ENCODE measurements at regions of chr2 and their contacts with region 1.

Region 1: GRCh38 chr2:106789197-106789596 is 96.8 kb downstream of the ST6GAL2 start:
- DNase-seq: no peak
- H3K4me3 ChIP-seq: no peak overlapping the region
- H3K27ac ChIP-seq: no peak overlapping the region
- H3K4me1 ChIP-seq: no peaks in the 10 kb centered on the region
- H3K27me3 ChIP-seq: no peaks in the 10 kb centered on the region
- CTCF ChIP-seq: no peak
- EP300 ChIP-seq: no peak
- POLR2A ChIP-seq: no peak

Region 2: GRCh38 chr2:106701203-106702022 is 87.8 kb before region 1 on chr2:
- in situ Hi-C with region 1: no loop called
- intact Hi-C with region 1: no loop called
- DNase-seq: peak; percentile 60
- H3K4me3 ChIP-seq: no peak overlapping the region
- H3K27ac ChIP-seq: peak overlapping the region in 2 of 4 donors; percentile 28 to 32
- H3K4me1 ChIP-seq: peaks cover 4 to 35% (median 21%) of the 10 kb centered on the region in 4 donors
- H3K27me3 ChIP-seq: no peaks in the 10 kb centered on the region
- CTCF ChIP-seq: no peak
- EP300 ChIP-seq: no peak
- POLR2A ChIP-seq: no peak

Region 3: GRCh38 chr2:106764614-106765013 is 24.6 kb before region 1 on chr2:
- in situ Hi-C with region 1: no loop called
- intact Hi-C with region 1: loop called (anchors 1 kb)
- DNase-seq: no peak
- H3K4me3 ChIP-seq: no peak overlapping the region
- H3K27ac ChIP-seq: no peak overlapping the region
- H3K4me1 ChIP-seq: no peaks in the 10 kb centered on the region
- H3K27me3 ChIP-seq: no peaks in the 10 kb centered on the region
- CTCF ChIP-seq: no peak
- EP300 ChIP-seq: no peak
- POLR2A ChIP-seq: no peak

Measured in transverse colon (tissue), 4 donors.